ENCODE measurements at regions of chr9 and their contacts with region 1.

Region 1: GRCh38 chr9:20462410-20462809 is 159.9 kb downstream of the MLLT3 start:
- DNase-seq: no peak
- ATAC-seq: no peak
- H3K4me3 ChIP-seq: no peak overlapping the region
- H3K27ac ChIP-seq: no peak overlapping the region
- H3K4me1 ChIP-seq: peaks cover 0 to 8% of the 10 kb centered on the region in 2 donors
- H3K27me3 ChIP-seq: no peaks in the 10 kb centered on the region
- CTCF ChIP-seq: no peak
- POLR2A ChIP-seq: no peak

Region 2: DNA sequence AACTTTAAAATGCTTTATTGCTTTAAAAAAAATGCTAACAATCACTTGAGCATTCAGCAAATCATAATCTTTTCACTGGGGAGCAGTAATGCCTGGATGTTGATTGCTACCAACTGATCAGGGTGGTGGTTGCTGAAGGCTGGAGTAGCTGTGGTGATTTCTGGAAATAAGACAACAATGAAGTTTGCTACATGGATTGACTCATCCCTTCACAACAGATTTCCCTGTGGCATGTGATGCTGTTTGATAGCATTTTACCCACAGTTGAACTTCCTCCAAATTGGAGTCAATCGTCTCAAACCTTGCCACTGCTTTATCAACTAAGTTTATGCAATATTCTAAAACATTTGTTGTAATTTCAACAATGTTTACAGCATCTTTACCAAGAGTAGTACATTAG is 76.5 kb after region 1 on chr9:
- in situ Hi-C with region 1: no loop called
- intact Hi-C with region 1: loop called (anchors 10 kb)
- DNase-seq: no peak
- ATAC-seq: no peak
- H3K4me3 ChIP-seq: no peak overlapping the region
- H3K27ac ChIP-seq: no peak overlapping the region
- H3K4me1 ChIP-seq: no peaks in the 10 kb centered on the region
- H3K27me3 ChIP-seq: no peaks in the 10 kb centered on the region
- CTCF ChIP-seq: no peak
- POLR2A ChIP-seq: no peak